ENCODE measurements at regions of chr11 and their contacts with region 1.

Region 1: GRCh38 chr11:8099291-8099899 is 18.4 kb downstream of the TUB start:
- DNase-seq: peak; percentile 78 to 94
- H3K4me3 ChIP-seq: no peak overlapping the region
- CTCF ChIP-seq: peak in 1 of 3 donors; percentile 57
- POLR2A ChIP-seq: no peak

Region 2: GRCh38 chr11:7577291-7578190 is 521.9 kb before region 1 on chr11:
- intact Hi-C with region 1: no loop called
- DNase-seq: peak; percentile 70 to 94
- H3K4me3 ChIP-seq: no peak overlapping the region
- CTCF ChIP-seq: no peak
- POLR2A ChIP-seq: no peak

Region 3: DNA sequence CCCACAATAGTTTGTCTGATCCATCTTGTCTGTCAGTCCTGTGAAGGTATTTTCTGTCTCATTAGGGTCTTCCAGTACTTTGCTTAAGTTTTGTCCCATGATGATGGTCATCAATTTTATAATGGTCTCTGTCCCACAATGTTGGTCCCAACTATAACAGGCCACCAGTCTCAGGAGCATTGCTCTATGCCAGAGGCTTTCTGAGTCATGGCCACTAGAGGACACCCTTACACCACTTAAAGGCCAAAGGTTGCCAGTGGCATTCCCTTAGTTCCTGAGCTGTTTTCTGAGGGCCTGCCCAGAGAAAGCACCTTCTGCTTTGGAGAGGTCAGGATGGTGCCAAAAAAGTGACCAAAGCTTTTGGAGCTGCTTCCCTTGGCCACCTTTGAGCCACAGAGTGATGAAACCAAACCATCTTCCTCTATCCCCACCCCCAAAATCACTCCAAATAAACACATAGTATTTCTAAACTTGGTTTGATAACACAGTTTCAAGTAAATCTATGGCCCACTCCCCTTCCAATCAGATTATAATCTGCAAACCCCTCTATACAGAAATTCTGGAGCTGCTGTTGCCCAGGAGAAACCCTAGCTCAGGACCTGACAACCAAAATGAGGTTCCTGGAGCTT is 92.9 kb before region 1 on chr11:
- intact Hi-C with region 1: loop called (anchors 10 kb)
- DNase-seq: peak; percentile 40 to 76
- H3K4me3 ChIP-seq: no peak overlapping the region
- CTCF ChIP-seq: peak in 1 of 3 donors; percentile 75
- POLR2A ChIP-seq: no peak

Region 4: DNA sequence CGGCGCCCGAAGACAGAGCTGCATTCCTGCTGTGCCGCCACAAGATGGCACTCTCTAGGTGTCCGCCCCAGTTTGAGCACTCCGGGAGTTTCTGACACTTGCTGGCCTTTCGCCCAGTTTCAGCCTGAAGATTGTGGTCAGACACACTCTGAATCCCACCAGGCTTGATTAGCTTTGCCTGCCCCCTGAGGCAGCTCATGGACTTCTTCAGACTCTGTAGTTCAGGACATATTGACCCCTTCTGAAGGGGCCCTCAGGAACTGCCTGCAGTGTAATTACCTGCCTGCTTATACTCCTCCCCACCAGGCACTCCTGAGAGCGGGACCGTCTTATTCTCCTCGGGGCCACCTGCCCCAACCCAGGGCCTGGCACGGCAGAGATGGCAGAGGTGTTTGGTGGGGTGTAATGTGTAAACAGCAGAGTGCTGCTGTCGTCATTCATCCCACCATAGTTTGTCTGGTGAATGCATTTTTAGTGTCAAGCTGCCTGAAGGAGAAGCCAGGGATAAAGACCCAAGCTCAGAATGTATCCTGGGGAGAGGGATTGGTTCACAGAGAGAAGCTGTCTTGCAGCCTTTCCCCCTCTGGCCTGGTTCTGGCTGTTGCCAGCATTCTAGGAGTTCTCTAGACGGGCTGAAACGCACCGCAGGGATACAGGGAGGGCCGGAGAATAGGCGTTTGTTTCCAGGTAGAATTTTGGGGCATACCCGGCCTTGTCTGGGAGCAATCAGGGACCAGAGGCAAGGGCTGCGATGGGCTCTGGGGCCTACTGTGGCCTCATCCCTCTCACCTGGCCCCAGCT is 65.9 kb before region 1 on chr11:
- intact Hi-C with region 1: loop called (anchors 10 kb)
- DNase-seq: peak; percentile 62 to 94
- H3K4me3 ChIP-seq: no peak overlapping the region
- CTCF ChIP-seq: peak in 1 of 3 donors; percentile 90
- POLR2A ChIP-seq: no peak